Aorta (tissue), 5 donors: ENCODE measurements at regions of chr7 and their contacts with region 1.

Region 1: GRCh38 chr7:4744391-4745264 is 30.8 kb upstream of the AP5Z1 start:
- DNase-seq: peak; percentile 99
- ATAC-seq: peak; percentile 94
- H3K4me3 ChIP-seq: no peak overlapping the region
- H3K27ac ChIP-seq: peak overlapping the region; percentile 62 to 99
- H3K4me1 ChIP-seq: peaks cover 0 to 2% of the 10 kb centered on the region in 2 donors
- H3K27me3 ChIP-seq: no peaks in the 10 kb centered on the region

Region 2: DNA sequence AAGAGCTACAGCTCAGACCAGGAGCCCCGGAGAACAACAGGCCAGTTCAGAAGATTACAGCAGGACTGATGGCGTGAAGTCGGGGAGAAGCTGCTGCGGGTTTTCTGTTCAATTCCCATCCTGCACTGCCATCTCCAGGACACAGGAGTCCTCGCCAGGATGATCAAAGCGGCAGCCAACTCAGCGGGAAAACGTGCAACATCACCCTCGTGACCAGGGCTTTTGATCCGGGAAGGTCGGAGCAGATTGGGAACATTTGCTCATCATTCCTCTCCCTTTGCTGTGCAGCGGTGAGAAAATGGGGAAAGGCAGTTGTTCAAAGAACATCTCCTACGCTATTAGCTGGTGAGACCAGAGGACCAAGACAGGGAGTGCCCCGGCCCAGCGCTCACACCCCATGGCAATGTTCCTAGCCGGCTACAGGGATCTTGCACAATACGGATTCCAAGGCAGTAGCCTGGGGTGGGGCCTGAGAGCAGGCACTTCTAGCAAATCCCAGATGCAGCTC is 112.9 kb before region 1 on chr7:
- intact Hi-C with region 1: loop called in 1 of 2 experiments (anchors 5 kb)
- DNase-seq: peak; percentile 90
- ATAC-seq: peak; percentile 93
- H3K4me3 ChIP-seq: no peak overlapping the region
- H3K27ac ChIP-seq: no peak overlapping the region
- H3K4me1 ChIP-seq: no peaks in the 10 kb centered on the region
- H3K27me3 ChIP-seq: no peaks in the 10 kb centered on the region

Region 3: GRCh38 chr7:4681886-4682620 is 62.6 kb before region 1 on chr7 and contains the start of gene FOXK1:
- intact Hi-C with region 1: loop called in 1 of 2 experiments (anchors 2 kb)
- DNase-seq: peak; percentile 83 to 92
- ATAC-seq: peak; percentile 90
- H3K4me3 ChIP-seq: peak within 1 kb of the TSS; percentile 80 to 98
- H3K27ac ChIP-seq: peak within 1 kb of the TSS; percentile 57 to 61
- H3K4me1 ChIP-seq: no peaks in the 10 kb centered on the region
- H3K27me3 ChIP-seq: no peaks in the 10 kb centered on the region
- total RNA-seq, gene FOXK1: 41.4 to 47.5 TPM

Region 4: DNA sequence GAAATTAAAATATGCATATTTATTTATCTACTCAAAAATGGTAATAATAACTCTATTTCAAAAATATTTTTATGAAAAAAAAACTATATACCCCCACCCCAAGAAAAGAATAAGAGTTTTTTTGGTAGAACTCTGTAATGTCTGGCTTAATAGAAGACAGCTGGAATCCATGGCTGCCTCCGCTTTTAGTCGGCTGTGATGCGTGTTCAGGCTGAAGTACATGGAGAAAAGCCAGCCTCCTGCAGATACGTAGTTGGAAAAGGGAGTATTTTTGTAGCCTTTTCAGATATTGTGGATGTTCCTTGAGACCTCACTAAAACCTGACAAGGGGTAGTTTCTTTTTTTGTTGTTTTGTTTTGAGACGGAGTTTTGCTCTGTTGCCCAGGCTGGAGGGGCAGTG is 52.6 kb before region 1 on chr7:
- intact Hi-C with region 1: no loop called
- DNase-seq: no peak
- ATAC-seq: no peak
- H3K4me3 ChIP-seq: no peak overlapping the region
- H3K27ac ChIP-seq: peak overlapping the region in 1 of 2 donors; percentile 17
- H3K4me1 ChIP-seq: peaks cover 0 to 3% of the 10 kb centered on the region in 2 donors
- H3K27me3 ChIP-seq: no peaks in the 10 kb centered on the region

Region 5: DNA sequence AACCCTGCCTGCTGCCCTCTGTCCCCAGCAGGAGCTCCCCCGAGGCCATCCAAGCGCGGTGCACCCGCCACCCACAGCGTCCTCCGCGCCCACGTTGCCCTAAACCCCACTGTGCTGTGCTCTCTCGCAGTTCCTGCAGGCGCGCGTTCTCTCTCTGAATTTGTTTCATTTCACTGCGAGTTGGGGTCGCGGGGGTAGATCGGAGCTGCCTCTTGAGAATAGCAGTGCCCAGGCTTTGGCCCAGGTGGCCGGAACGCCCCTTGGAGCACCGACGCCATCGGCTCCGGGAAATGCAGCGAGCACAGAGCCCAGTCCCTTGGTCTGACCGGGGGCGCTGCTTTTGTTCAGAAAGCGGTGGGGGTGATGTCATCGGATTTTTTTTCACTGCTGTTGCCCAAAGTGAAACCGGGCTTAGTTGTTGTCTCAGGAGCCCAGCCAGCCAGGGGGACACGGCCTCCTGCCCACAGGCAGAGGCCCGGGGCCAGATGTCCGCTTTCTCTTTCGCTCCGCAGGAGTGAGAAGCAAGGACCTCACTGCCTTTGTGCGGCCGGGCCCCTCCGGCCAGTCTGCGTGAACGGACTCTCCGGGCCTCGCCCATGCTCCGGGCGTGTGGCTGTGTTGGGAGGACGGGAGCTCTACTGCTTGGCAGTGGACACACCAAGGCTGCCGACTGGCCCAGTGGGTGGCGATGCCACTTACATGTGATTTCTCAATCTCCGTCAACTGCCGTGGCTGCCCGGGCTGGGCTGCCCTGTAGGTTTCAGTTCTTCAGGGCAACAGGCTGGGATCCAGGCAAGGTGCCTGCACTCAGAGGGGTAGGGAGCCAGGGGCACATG is 19.4 kb before region 1 on chr7:
- intact Hi-C with region 1: loop called in 1 of 2 experiments (anchors 1 kb)
- DNase-seq: peak; percentile 92 to 93
- ATAC-seq: peak; percentile 88
- H3K4me3 ChIP-seq: peak overlapping the region; percentile 12 to 44
- H3K27ac ChIP-seq: peak overlapping the region; percentile 12 to 76
- H3K4me1 ChIP-seq: no peaks in the 10 kb centered on the region
- H3K27me3 ChIP-seq: no peaks in the 10 kb centered on the region

Region 6: GRCh38 chr7:4845740-4846142 is 101.1 kb after region 1 on chr7:
- intact Hi-C with region 1: no loop called
- DNase-seq: no peak
- ATAC-seq: peak; percentile 55
- H3K4me3 ChIP-seq: no peak overlapping the region
- H3K27ac ChIP-seq: no peak overlapping the region
- H3K4me1 ChIP-seq: no peaks in the 10 kb centered on the region
- H3K27me3 ChIP-seq: no peaks in the 10 kb centered on the region